Activated CD4-positive, alpha-beta T cell treated with anti-CD3 and anti-CD28 coated beads for 36 hours (primary cell): ENCODE measurements at regions of chr16 and their contacts with region 1.

Region 1: GRCh38 chr16:57447186-57447962 is at the starts of genes CIAPIN1 and COQ9:
- DNase-seq: peak; percentile 96
- ATAC-seq: peak; percentile 99
- H3K4me3 Mint-ChIP-seq: peak within 1 kb of the TSS; percentile 91
- H3K27ac Mint-ChIP-seq: peak within 1 kb of the TSS; percentile 85
- H3K4me1 Mint-ChIP-seq: peaks cover 32% of the 10 kb centered on the region
- H3K27me3 Mint-ChIP-seq: no peaks in the 10 kb centered on the region
- total RNA-seq, gene CIAPIN1: 41.7 to 42.6 TPM
- total RNA-seq, gene COQ9: 39.4 to 52.1 TPM

Region 2: GRCh38 chr16:57244767-57245471 is 202.5 kb before region 1 on chr16 and contains the start of gene ARL2BP:
- CTCF ChIA-PET with region 1: no interaction called
- POLR2A ChIA-PET with region 1: no interaction called
- intact Hi-C with region 1: loop called in 1 of 2 experiments (anchors 1 kb)
- DNase-seq: peak; percentile 99
- ATAC-seq: peak; percentile 97
- H3K4me3 Mint-ChIP-seq: peak within 1 kb of the TSS; percentile 86
- H3K27ac Mint-ChIP-seq: peak within 1 kb of the TSS; percentile 92
- H3K4me1 Mint-ChIP-seq: peaks cover 19% of the 10 kb centered on the region
- H3K27me3 Mint-ChIP-seq: no peaks in the 10 kb centered on the region
- total RNA-seq, gene ARL2BP: 9.9 to 11.1 TPM

Region 3: DNA sequence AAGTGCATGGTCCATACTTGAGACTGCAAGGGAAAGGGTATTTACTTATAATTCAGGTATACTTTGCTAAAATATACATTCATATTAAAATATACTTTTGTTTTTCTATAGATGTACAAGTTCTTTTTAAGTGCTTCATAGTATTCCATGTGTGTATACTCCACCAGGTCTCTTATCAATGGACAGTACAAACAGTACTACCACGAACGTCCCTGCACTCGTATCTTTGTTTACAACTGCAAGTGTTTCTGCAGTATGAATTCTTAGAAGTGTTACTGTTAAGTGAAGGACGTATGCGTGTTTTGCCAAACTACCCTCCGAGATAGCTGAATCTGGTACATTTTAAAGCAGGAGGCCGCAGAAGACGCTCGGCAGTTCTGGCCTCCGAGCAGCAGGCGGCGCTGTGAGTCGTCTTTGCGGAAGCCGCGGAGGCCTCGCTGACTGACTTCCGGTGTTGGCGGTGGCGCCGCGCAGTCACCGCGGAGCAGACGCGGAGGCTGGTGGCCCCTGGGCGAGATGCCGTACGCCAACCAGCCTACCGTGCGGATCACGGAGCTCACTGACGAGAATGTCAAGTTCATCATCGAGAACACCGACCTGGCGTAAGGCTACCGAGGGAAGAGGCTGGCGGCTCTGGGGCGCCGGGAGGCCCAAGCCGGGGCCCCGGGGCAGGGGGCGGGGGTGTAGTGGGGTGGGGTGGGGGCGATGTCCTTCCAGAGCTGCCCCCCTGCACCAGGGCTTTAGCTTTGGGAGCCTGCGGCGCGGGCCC is 15.0 kb after region 1 on chr16 and contains the start of gene POLR2C:
- CTCF ChIA-PET with region 1: interaction called, 63 read pairs
- POLR2A ChIA-PET with region 1: interaction called, 17 read pairs
- intact Hi-C with region 1: loop called (anchors 1 kb)
- DNase-seq: peak; percentile 96
- ATAC-seq: peak; percentile 96
- H3K4me3 Mint-ChIP-seq: peak within 1 kb of the TSS; percentile 90
- H3K27ac Mint-ChIP-seq: peak within 1 kb of the TSS; percentile 99
- H3K4me1 Mint-ChIP-seq: peaks cover 24% of the 10 kb centered on the region
- H3K27me3 Mint-ChIP-seq: no peaks in the 10 kb centered on the region
- total RNA-seq, gene POLR2C: 54.3 to 57.1 TPM

Region 4: DNA sequence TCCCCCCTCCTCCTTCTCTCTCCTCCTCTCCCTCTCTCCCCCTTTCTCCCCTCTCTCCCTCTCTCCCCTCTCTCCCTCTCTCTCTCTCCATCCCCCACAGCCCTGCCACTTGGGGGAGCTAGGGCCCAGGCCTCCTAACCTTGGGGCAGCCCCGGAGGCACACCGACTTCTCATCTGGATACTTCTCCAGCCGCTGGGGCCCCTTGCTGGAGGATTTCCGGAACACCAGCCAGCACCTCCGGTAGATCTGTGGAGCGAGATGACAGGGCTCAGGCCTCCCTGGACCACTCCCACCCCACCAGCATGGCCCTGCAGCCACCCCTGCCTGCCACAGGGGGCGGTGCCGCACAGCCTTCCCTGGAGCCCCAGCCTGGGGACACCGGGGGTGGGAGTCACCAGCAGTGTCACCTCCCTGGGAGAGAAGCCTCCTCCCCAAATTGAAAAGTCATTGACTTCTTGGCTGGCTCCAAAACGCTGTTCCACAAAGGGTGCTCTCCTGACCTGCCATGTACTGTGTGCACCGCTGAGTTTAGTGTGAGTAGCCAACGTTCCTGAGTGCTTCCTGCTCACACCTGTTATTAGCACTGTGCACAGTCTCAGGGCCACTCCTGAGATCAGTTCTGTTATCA is 28.5 kb after region 1 on chr16:
- CTCF ChIA-PET with region 1: interaction called, 3 read pairs
- POLR2A ChIA-PET with region 1: no interaction called
- intact Hi-C with region 1: loop called in 1 of 2 experiments (anchors 1 kb)
- DNase-seq: peak; percentile 95
- ATAC-seq: peak; percentile 98
- H3K4me3 Mint-ChIP-seq: no peak overlapping the region
- H3K27ac Mint-ChIP-seq: peak overlapping the region; percentile 63
- H3K4me1 Mint-ChIP-seq: peaks cover 19% of the 10 kb centered on the region
- H3K27me3 Mint-ChIP-seq: no peaks in the 10 kb centered on the region

Region 5: DNA sequence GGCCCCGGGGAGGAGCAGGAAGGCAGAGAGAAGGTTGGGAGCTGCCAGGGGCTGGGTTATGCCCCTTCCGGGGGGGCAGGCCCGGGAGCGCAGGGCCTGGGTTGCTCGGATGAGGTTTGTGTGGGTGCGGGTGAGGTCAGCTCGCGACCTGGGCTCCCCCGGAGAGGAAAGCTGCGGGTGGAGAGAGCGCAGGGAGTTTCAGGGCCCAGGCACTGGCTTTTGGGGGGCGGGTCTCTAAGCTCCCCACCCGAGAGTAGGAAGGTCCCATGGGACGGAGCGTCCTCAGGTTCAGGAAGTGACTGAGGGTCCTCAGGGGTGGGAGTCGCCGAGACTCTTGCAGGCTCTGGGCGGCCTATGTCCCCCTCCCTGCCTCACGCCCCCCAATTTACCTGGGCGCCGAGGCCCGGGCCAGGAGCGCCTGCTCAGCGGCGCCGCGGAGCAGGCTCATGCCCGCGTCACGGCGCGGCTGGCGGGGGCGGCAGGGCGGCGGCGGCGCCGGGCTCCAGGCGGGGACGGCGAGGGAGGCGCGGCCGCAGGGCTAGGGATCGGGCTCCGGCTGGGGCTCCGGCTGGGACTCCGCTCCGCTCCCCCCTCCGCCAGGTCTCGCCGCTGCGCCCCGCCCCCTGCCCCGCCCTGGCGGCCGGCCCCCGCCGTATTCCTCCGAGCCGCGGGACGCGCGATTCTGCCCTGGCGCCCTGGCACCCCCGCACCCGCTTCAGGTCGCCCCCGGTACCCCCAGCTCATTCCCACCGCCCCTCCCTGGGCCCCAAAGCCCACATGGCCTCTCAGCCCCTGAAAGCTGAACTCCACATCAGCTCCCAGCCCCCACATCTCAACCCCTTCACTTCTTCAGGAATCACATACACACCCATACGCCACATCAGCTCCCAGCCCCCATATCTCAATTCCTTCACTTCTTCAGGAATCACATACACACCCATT is 38.8 kb after region 1 on chr16 and contains the start of gene DOK4:
- CTCF ChIA-PET with region 1: interaction called, 5 read pairs
- POLR2A ChIA-PET with region 1: interaction called, 3 read pairs
- intact Hi-C with region 1: loop called in 1 of 2 experiments (anchors 1 kb)
- DNase-seq: peak; percentile 89
- ATAC-seq: peak; percentile 93
- H3K4me3 Mint-ChIP-seq: peak within 1 kb of the TSS; percentile 75
- H3K27ac Mint-ChIP-seq: peak within 1 kb of the TSS; percentile 71
- H3K4me1 Mint-ChIP-seq: peaks cover 22% of the 10 kb centered on the region
- H3K27me3 Mint-ChIP-seq: no peaks in the 10 kb centered on the region
- total RNA-seq, gene DOK4: 5.7 to 6.7 TPM

Region 6: DNA sequence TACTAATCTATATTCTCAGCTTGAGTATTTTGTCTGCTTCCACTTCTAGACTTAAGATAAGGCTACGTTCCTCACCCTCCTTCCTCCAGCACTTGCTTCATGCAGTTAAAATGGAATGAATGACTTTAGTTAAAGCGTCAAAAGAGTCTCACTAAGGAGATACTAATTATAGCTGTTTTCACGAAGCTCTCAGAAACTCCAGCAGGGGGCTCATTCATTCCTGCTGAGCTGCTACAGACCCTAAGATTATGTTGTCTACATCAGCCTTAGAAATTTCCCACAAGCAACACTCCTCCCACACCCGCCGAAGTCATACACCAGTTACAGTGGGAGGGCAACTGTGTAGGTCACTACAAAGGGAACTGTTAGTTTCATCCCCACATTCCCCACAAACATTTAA is 412.0 kb after region 1 on chr16:
- CTCF ChIA-PET with region 1: no interaction called
- POLR2A ChIA-PET with region 1: no interaction called
- intact Hi-C with region 1: no loop called
- DNase-seq: no peak
- ATAC-seq: no peak
- H3K4me3 Mint-ChIP-seq: no peak overlapping the region
- H3K27ac Mint-ChIP-seq: no peak overlapping the region
- H3K4me1 Mint-ChIP-seq: no peaks in the 10 kb centered on the region
- H3K27me3 Mint-ChIP-seq: peaks cover 19% of the 10 kb centered on the region